WTC11 (cell line): ENCODE measurements at regions of chr17 and their contacts with region 1.

Region 1: DNA sequence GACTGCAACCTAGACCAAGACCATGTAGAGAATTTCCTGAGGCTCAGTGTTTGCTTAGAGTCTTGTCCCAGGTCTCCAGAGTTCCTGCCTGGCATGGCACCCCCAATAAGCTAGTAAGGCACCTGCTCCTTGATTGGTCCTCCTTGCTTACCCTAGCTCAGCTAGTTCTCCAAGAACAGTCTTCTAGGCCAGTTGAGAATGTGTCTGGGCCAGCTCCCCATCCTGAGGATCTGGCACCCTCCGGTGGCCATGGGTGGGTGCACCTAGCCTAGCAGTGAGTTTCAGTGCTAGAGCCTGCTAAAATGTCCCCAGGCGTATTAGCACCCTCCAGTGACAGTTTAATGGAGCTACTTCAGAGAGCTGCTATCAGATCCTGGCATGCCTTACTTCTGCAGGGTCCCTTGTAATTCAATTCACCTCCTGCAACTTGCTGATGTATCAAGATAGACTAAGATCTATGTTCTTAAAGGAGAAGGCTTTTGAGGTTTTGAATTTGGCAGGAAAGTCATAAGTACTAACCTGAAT is 44.4 kb upstream of the MED13 start:
- DNase-seq: peak; percentile 85
- ATAC-seq: peak; percentile 98
- H3K4me3 Mint-ChIP-seq: no peak overlapping the region
- H3K27ac Mint-ChIP-seq: no peak overlapping the region
- H3K4me1 Mint-ChIP-seq: peaks cover 9% of the 10 kb centered on the region
- H3K27me3 Mint-ChIP-seq: no peaks in the 10 kb centered on the region
- CTCF ChIP-seq: peak; percentile 51; the same call in 1 of the 2 replicates

Region 2: DNA sequence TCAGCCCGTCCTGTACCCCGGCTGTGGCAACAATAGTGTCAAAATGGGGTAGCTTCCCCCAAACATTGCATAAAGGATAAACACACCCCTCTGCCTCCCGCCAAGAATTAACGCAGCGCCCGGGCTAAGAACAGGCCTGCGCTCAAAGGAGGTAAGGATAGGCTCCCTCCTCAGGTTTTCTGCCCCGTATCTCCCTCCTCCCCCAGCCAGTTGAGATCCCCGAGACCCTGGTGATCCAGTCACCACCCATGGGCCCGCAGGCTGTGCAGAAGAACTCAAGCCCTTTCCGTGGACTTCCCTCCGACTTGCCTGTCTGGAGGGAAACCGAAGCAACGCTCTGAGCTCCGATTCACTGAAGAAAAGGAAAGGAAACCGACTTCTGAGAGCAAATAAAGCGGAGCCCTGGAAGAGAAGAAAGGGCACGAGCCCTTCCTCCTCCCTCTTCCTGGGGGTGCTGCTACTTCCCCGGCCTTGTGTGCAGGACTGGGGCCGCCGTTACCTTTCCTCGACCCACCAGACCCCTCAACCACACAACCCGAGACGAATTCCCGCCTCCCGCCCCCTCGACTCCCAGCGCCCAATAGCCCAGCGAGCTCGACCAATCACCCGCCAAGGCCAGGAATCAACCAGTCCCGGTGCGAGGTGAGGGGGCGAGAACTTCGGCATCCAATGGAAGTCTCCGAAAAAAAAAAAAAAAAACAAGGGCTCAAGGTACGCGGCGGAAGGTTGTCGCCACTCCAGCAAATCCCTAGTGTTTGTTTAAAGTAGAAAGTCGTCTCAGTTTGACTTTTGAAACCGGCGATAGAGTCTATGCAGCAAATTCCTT is 246.3 kb before region 1 on chr17 and contains the start of gene BRIP1:
- CTCF ChIA-PET with region 1: interaction called, 27 read pairs
- POLR2A ChIA-PET with region 1: no interaction called
- DNase-seq: peak; percentile 94
- ATAC-seq: peak; percentile 98
- H3K4me3 Mint-ChIP-seq: peak within 1 kb of the TSS; percentile 98
- H3K27ac Mint-ChIP-seq: peak within 1 kb of the TSS; percentile 96
- H3K4me1 Mint-ChIP-seq: peaks cover 20% of the 10 kb centered on the region
- H3K27me3 Mint-ChIP-seq: no peaks in the 10 kb centered on the region
- CTCF ChIP-seq: no peak
- total RNA-seq, gene BRIP1: 13.8 to 17.6 TPM (median 16.0 TPM) in 3 replicates

Region 3: GRCh38 chr17:61997664-61998063 is 111.8 kb before region 1 on chr17:
- CTCF ChIA-PET with region 1: interaction called, 10 read pairs
- POLR2A ChIA-PET with region 1: no interaction called
- DNase-seq: no peak
- ATAC-seq: no peak
- H3K4me3 Mint-ChIP-seq: no peak overlapping the region
- H3K27ac Mint-ChIP-seq: no peak overlapping the region
- H3K4me1 Mint-ChIP-seq: peaks cover 4% of the 10 kb centered on the region; the same call in 1 of the 2 replicates
- H3K27me3 Mint-ChIP-seq: no peaks in the 10 kb centered on the region
- CTCF ChIP-seq: no peak

Region 4: GRCh38 chr17:62038248-62038647 is 71.2 kb before region 1 on chr17:
- CTCF ChIA-PET with region 1: interaction called, 10 read pairs
- POLR2A ChIA-PET with region 1: no interaction called
- DNase-seq: no peak
- ATAC-seq: no peak
- H3K4me3 Mint-ChIP-seq: no peak overlapping the region
- H3K27ac Mint-ChIP-seq: no peak overlapping the region
- H3K4me1 Mint-ChIP-seq: no peaks in the 10 kb centered on the region
- H3K27me3 Mint-ChIP-seq: no peaks in the 10 kb centered on the region
- CTCF ChIP-seq: no peak

Region 5: DNA sequence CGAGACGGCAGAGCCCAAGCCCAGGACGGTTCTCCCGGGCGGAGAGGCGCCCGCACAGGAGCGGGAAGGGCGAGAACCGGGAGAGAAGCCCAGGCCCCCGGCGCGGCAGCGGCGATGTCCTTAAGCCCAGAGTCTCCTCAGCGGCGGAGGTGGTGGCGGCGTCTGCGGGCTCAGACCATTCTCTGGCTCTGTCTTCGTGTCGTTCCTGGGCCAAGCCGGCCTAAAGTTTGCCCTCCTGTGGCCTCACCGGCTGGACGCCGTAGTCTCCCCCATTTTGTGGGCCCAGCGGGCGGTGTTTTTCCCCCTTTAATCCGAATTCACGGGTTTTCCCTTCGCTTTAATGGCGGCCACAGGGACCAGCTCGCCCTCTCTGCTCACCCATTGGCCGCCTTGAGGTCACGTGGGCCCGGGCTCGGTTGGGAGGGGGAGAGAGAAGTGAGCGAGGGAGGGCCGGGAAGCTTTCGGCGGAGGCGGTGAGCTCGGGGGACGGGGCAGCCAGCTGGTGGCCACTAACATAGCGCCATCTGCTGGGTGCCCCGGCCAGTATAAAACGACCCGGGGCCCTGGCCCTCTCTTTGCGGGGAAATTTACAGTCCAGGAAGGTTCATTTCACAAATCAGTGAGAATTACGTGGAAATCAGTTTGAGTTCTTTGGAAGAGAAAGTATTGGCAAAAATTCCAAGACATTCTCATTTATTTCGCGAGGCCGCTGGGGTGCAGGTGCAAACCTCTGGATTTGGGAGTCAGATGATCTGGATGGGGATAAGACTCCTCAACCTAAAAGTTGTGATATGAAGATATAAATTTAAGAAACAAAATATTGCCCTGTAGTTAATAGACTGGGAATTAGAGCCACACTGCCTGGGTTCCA is 43.6 kb before region 1 on chr17:
- CTCF ChIA-PET with region 1: interaction called, 54 read pairs
- POLR2A ChIA-PET with region 1: interaction called, 4 read pairs
- DNase-seq: peak; percentile 99
- ATAC-seq: peak; percentile 96
- H3K4me3 Mint-ChIP-seq: peak overlapping the region; percentile 94
- H3K27ac Mint-ChIP-seq: peak overlapping the region; percentile 98
- H3K4me1 Mint-ChIP-seq: peaks cover 34% of the 10 kb centered on the region
- H3K27me3 Mint-ChIP-seq: no peaks in the 10 kb centered on the region
- CTCF ChIP-seq: peak; percentile 71

Region 6: GRCh38 chr17:62098623-62099231 is 10.7 kb before region 1 on chr17:
- CTCF ChIA-PET with region 1: interaction called, 43 read pairs
- POLR2A ChIA-PET with region 1: no interaction called
- DNase-seq: no peak
- ATAC-seq: no peak
- H3K4me3 Mint-ChIP-seq: no peak overlapping the region
- H3K27ac Mint-ChIP-seq: no peak overlapping the region
- H3K4me1 Mint-ChIP-seq: peaks cover 5% of the 10 kb centered on the region
- H3K27me3 Mint-ChIP-seq: no peaks in the 10 kb centered on the region; the same call in 1 of the 2 replicates
- CTCF ChIP-seq: no peak

Region 7: DNA sequence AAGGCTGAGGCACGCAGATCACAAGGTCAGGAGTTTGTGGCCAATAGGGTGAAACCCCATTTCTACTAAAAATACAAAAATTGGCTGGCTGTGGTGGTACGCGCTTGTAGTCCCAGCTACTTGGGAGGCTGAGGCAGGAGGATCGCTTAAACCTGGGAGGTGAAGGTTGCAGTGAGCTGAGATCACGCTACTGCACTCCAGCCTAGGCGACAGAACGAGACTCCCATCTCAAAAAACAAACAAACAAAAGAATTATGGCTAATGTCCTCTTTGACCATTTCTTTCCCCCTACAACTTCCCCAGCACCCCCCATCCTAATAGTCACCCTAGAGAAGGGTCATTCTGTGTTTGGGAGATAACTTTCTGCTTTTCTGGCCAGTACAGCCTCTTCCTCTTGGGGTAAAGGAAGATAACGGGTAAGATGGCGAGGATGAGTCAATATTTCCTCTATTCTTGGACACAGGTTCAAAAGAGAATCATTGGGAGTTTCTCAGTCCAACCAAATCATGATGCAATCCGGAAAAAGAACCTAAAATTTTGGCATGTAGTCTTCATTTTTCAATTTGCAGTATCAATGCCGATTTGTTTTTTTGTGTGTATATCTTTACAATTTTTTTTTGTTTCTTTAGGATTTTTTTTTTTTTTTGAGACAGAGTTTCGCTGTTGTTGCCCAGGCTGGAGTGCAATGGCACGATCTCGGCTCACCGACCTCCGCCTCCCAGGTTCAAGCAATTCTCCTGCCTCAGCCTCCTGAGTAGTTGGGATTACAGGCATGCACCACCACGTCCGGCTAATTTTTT is 63.3 kb after region 1 on chr17:
- CTCF ChIA-PET with region 1: no interaction called
- POLR2A ChIA-PET with region 1: no interaction called
- DNase-seq: no peak
- ATAC-seq: no peak
- H3K4me3 Mint-ChIP-seq: no peak overlapping the region
- H3K27ac Mint-ChIP-seq: no peak overlapping the region
- H3K4me1 Mint-ChIP-seq: no peaks in the 10 kb centered on the region
- H3K27me3 Mint-ChIP-seq: no peaks in the 10 kb centered on the region
- CTCF ChIP-seq: no peak